GM10248 (cell line): ENCODE measurements at regions of chr16 and their contacts with region 1.

Region 1: GRCh38 chr16:20774703-20775362 is 11.0 kb downstream of the ACSM3 start:
- DNase-seq: peak; percentile 65
- CTCF ChIP-seq: peak; percentile 67

Region 2: DNA sequence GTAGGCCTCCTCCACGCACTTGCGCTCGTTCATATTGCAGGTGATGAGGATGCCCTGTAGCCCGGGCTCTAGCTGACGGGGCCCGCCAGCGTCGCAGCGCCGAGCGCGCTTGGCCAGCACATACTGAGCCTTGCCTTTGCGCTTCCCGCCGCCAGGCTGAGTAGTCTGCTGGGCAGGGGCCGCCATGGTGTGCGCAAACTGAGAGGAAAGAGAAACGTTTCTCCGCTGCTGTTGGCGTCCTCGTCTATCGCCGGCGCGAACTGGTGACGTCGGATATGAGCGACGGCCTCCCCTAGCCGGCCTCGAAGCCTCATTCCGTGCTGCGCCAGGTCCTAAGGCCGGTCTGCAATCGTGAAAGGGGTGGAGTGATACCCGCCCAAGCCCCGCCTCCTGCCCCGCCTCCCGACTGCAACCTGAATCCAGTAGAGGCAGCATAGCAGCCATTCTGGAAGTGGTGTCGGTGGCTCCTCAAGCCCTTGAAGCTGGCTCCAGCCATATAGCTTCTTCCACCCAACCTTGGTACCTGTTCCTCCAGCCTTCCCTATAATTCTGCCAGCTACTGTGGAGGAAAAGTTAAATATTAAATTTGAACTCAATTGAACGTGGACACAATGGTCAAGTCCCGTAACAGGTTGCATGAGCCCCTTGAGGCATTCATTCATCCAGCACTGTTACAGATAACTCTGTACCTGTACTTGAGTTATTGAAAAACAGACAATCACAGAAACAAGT is 33.1 kb before region 1 on chr16 and contains the start of gene THUMPD1:
- CTCF ChIA-PET with region 1: no interaction called
- POLR2A ChIA-PET with region 1: no interaction called
- DNase-seq: peak; percentile 98
- CTCF ChIP-seq: no peak

Region 3: GRCh38 chr16:20763461-20764232 is 11.2 kb before region 1 on chr16 and contains the start of gene ACSM3:
- CTCF ChIA-PET with region 1: interaction called, 14 read pairs
- POLR2A ChIA-PET with region 1: no interaction called
- DNase-seq: peak; percentile 88
- CTCF ChIP-seq: no peak

Region 4: GRCh38 chr16:20791923-20792612 is 17.2 kb after region 1 on chr16:
- CTCF ChIA-PET with region 1: interaction called, 53 read pairs
- POLR2A ChIA-PET with region 1: no interaction called
- DNase-seq: no peak
- CTCF ChIP-seq: no peak

Region 5: DNA sequence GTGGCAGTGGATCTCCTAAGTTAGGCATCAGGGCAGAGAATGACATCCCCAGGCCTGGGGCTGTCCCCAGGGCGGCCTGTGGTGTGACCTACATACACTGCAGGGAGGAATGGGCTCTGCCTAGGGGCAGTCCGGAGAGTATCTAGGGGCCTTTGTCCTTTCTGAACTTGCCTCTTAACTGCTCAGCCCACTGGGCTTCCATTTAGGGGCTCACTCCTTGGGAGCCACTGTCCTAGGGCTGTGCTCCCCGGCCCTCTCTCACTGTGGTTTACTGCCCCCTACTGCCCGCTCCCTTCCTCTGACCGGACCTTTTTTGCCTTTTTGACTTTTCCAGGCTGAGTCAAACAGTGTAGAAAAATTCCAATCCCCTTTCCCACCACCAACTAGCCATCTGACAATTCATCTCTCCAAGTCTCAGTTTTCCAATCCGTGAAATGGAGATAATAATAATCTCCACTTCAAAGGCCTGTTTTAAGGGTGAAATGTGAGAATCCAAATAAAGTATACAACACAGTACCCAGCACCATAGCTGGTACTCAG is 309.0 kb after region 1 on chr16:
- CTCF ChIA-PET with region 1: interaction called, 12 read pairs
- POLR2A ChIA-PET with region 1: no interaction called
- DNase-seq: peak; percentile 54
- CTCF ChIP-seq: peak; percentile 71